ENCODE measurements at regions of chr5 and their contacts with region 1.

Region 1: GRCh38 chr5:65481635-65482295 is at the start of gene ADAMTS6:
- DNase-seq: peak; percentile 78
- H3K4me3 ChIP-seq: peak within 1 kb of the TSS; percentile 74 to 89
- H3K27ac ChIP-seq: peak within 1 kb of the TSS; percentile 94 to 97
- H3K4me1 ChIP-seq: peaks cover 0 to 12% of the 10 kb centered on the region in 2 experiments; a peak in 1 of 4 replicates
- H3K27me3 ChIP-seq: no peaks in the 10 kb centered on the region
- CTCF ChIP-seq: no peak
- EP300 ChIP-seq: peak in 1 of 2 experiments; percentile 19; a peak in 1 of 4 replicates
- RAD21 ChIP-seq: peak; percentile 39; the same call in 1 of the 2 replicates
- polyA plus RNA-seq, gene ADAMTS6: 15.0 and 25.8 TPM in 2 replicates

Region 2: GRCh38 chr5:64958757-64959391 is 522.9 kb before region 1 on chr5:
- CTCF ChIA-PET with region 1: interaction called, 47 read pairs
- POLR2A ChIA-PET with region 1: no interaction called
- DNase-seq: peak; percentile 11
- H3K4me3 ChIP-seq: no peak overlapping the region
- H3K27ac ChIP-seq: no peak overlapping the region
- H3K4me1 ChIP-seq: no peaks in the 10 kb centered on the region; a peak in 1 of 4 replicates
- H3K27me3 ChIP-seq: no peaks in the 10 kb centered on the region
- CTCF ChIP-seq: peak; percentile 81
- EP300 ChIP-seq: no peak
- RAD21 ChIP-seq: peak; percentile 79

Region 3: DNA sequence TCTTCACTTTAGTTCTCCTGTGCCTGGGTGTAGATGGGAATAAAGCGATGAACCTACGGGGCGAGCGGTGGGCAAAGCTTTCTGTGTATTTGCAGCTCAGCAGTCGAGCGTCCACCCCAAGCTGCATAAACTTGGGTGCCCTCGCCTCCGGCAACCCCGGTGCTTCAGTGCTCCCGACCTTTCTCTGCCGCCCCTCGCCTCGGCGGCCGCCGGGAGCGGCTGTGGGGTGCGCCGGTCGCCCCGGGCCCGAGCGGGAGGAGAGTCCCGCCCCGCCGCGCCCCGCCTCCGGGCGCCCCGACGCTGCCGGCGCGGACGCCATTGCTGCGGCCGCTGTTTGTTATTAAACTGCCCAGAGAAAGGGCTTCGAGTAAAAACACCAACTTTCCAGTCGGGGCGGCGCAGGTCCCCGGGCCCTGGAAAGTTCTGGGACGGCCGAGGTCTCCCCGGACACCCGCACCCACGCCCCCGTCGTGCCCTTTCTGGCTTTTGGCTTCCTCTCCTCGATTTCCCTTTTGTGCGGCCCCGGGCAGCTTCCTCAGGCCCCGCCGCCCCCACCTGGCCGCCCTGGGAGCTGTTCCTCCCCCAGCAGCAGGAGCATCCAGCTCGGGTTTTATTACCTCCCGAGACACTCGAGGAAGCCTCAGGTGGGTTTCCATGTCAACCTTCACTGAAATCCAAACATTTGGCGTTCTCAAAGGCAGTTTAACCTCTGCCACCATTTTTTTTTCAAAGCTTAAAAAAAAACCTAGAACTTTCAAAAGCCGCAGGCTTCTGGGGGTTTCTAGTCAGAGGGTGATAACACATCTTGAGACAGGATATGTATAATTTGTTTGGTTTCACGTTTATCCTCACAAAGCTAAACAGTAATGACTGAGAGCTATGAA is 378.7 kb before region 1 on chr5:
- CTCF ChIA-PET with region 1: interaction called, 12 read pairs
- POLR2A ChIA-PET with region 1: no interaction called
- DNase-seq: peak; percentile 79
- H3K4me3 ChIP-seq: peak overlapping the region in 1 of 2 experiments; percentile 42; a peak in 2 of 4 replicates
- H3K27ac ChIP-seq: peak overlapping the region in 1 of 2 experiments; percentile 22; a peak in 1 of 4 replicates
- H3K4me1 ChIP-seq: peaks cover 6 to 8% of the 10 kb centered on the region in 2 experiments; a peak in 2 of 4 replicates
- H3K27me3 ChIP-seq: no peaks in the 10 kb centered on the region
- CTCF ChIP-seq: no peak
- EP300 ChIP-seq: no peak
- RAD21 ChIP-seq: no peak

Region 4: DNA sequence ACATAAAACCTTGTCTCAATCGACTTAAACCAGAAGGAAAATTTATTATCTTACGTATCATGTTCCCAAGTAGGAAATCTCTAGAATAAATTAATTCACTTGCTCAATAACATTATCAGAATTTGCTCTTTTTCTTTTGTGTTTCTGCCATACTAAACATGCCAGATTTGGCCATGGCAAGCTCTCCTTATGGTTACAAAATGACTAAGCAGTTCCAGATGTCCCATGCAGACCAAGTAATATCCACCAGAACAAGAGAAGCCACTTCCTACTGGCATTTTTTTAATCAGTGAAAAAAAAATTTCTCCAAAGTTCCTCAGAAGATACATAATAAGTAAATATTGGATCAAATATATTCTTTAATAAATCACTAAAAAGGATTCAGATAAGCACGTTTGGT is 25.2 kb after region 1 on chr5:
- CTCF ChIA-PET with region 1: no interaction called
- POLR2A ChIA-PET with region 1: no interaction called
- DNase-seq: peak; percentile 33
- H3K4me3 ChIP-seq: 0 out of 4 replicates have a peak overlapping the region, but pooled peaks of 1 of the 2 experiments have one; percentile 10
- H3K27ac ChIP-seq: peak overlapping the region; percentile 54 to 56; a peak in 3 of 4 replicates
- H3K4me1 ChIP-seq: 0 out of 4 replicates have a peak, but pooled peaks cover 0 to 3% of the 10 kb centered on the region in 2 experiments
- H3K27me3 ChIP-seq: no peaks in the 10 kb centered on the region
- CTCF ChIP-seq: no peak
- EP300 ChIP-seq: no peak
- RAD21 ChIP-seq: no peak

Measured in SK-N-SH (cell line).